ENCODE measurements at regions of chr20 and their contacts with region 1.

Region 1: DNA sequence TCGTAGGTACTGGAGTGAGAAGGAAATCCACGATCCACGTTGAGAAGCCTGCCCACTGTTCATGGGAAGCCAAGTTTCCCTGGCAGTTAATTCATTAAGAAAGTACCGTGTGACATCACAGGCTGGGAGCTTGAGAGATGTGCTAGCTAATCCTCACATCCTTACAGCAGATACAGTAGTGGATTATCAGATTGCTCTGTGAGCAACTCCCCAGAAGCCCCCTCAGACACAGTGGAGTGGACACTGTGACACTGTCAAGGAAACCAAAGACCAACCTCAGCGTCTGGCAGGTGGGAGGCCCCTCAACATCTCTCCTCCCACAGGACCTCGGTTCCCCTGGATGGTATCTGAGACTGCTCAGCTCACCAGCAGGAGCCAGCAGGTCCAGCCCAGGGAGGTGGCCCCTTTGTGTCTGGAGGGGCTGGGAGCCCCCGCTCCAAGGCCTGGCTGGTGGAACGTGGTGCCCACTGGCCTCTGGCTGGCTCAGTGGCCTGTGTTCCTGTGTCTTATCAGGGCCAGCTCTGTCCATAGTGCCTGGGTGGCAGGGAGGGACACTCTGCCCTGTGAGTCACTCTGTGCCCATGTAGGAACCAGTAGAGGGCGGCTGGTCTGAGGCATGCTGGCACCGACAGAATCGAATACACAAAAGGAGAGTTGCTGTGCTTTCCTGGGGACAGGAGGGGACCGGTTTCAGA is 7.2 kb downstream of the PYGB start:
- DNase-seq: no peak
- ATAC-seq: no peak
- H3K4me3 ChIP-seq: no peak overlapping the region
- H3K4me3 Mint-ChIP-seq: no peak overlapping the region
- H3K27ac ChIP-seq: no peak overlapping the region
- H3K27ac Mint-ChIP-seq: peak overlapping the region; percentile 15
- H3K4me1 ChIP-seq: peaks cover 13% of the 10 kb centered on the region
- H3K4me1 Mint-ChIP-seq: peaks cover 74% of the 10 kb centered on the region
- H3K27me3 ChIP-seq: no peaks in the 10 kb centered on the region
- H3K27me3 Mint-ChIP-seq: no peaks in the 10 kb centered on the region
- CTCF ChIP-seq: no peak

Region 2: GRCh38 chr20:25081065-25081729 is 173.9 kb before region 1 on chr20:
- CTCF ChIA-PET with region 1: interaction called, 3 read pairs
- POLR2A ChIA-PET with region 1: no interaction called
- intact Hi-C with region 1: loop called in 1 of 2 experiments (anchors 5 kb)
- DNase-seq: peak in 10 of 14 experiments; percentile 15 to 68 (median 29)
- ATAC-seq: peak; percentile 57
- H3K4me3 ChIP-seq: no peak overlapping the region
- H3K4me3 Mint-ChIP-seq: no peak overlapping the region
- H3K27ac ChIP-seq: no peak overlapping the region
- H3K27ac Mint-ChIP-seq: no peak overlapping the region
- H3K4me1 ChIP-seq: peaks cover 40% of the 10 kb centered on the region
- H3K4me1 Mint-ChIP-seq: peaks cover 27% of the 10 kb centered on the region
- H3K27me3 ChIP-seq: peaks cover 88 to 93% of the 10 kb centered on the region in 2 experiments
- H3K27me3 Mint-ChIP-seq: peaks cover 81% of the 10 kb centered on the region
- CTCF ChIP-seq: no peak

Region 3: DNA sequence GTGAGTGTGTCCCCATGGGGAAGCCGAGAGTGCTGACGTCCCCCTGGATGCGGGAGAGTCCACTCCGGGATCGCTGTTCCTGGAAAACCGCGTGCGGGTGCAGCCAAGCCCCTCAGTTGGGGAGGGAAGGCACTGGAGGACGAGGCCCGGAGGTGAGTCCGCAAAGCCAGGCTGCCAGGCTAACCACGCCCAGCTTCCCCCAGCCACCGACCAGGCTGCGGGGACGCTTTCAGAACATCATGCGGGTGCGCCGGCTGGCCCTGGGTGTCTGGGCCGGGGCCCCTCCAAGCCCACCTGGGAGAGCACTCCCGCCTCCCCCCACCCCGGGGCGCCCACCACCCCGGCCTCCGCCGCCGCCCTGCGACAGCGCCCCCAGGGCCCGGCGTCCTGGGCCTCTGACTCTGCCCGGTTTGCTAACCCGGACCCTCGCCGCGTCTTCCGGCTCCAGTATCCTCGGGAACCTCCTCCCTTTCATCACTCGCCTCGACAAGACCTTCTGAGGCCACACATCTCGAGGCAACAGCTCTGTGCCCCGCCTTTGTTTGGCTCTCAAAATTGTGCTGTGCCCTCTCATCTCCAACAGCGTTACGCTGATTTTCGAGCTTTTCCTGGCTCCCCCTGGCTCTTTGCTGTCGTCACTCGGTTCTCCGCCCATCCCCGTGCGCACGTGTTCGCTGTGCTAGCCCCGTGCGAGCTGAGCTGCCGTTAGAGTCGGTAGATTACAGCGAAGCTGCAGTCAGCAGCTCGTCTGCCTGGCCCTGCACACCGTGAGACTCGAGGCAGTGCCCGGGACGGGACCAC is 106.8 kb before region 1 on chr20:
- CTCF ChIA-PET with region 1: no interaction called
- POLR2A ChIA-PET with region 1: no interaction called
- intact Hi-C with region 1: no loop called
- DNase-seq: peak; percentile 29 to 82 (median 60)
- ATAC-seq: peak; percentile 95
- H3K4me3 ChIP-seq: peak overlapping the region; percentile 58
- H3K4me3 Mint-ChIP-seq: peak overlapping the region; percentile 94
- H3K27ac ChIP-seq: no peak overlapping the region
- H3K27ac Mint-ChIP-seq: peak overlapping the region; percentile 89
- H3K4me1 ChIP-seq: peaks cover 12% of the 10 kb centered on the region
- H3K4me1 Mint-ChIP-seq: peaks cover 7% of the 10 kb centered on the region
- H3K27me3 ChIP-seq: peaks cover 5 to 9% of the 10 kb centered on the region in 2 experiments
- H3K27me3 Mint-ChIP-seq: peaks cover 5% of the 10 kb centered on the region
- CTCF ChIP-seq: no peak